ENCODE measurements at regions of chr6 and their contacts with region 1.

Region 1: DNA sequence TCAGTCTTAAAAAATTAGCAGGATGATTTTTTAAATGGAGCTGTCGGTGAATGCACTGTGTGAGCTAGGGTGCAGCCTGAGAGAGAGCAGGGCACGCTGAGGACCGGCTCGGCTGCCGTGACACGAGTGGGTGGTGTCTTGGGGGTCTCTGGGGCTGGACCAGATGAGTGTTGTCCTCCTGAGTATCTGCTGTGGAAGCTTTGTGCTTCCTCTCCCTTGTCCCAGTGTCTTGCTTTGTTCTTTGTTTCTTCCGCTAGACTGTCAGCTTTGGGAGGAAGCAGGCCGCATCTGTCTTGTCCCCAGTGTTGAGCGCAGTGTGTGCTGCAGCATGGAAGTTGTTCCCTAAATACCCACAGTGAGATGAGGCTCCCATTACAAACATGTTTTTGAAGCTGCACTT is 89.4 kb downstream of the RTN4IP1 start:
- DNase-seq: no peak
- ATAC-seq: no peak
- H3K4me3 ChIP-seq: no peak overlapping the region
- H3K4me3 Mint-ChIP-seq: no peak overlapping the region
- H3K27ac ChIP-seq: no peak overlapping the region
- H3K27ac Mint-ChIP-seq: peak overlapping the region; percentile 32
- H3K4me1 ChIP-seq: peaks cover 21% of the 10 kb centered on the region
- H3K4me1 Mint-ChIP-seq: peaks cover 44% of the 10 kb centered on the region
- H3K27me3 ChIP-seq: no peaks in the 10 kb centered on the region
- H3K27me3 Mint-ChIP-seq: no peaks in the 10 kb centered on the region
- CTCF ChIP-seq: no peak

Region 2: GRCh38 chr6:106525111-106525881 is 14.6 kb before region 1 on chr6:
- CTCF ChIA-PET with region 1: interaction called, 3 read pairs
- POLR2A ChIA-PET with region 1: interaction called, 3 read pairs
- intact Hi-C with region 1: loop called in 1 of 2 experiments (anchors 1 kb)
- DNase-seq: peak in 2 of 9 experiments; percentile 53 to 73
- ATAC-seq: peak; percentile 12
- H3K4me3 ChIP-seq: peak overlapping the region; percentile 35 to 38
- H3K4me3 Mint-ChIP-seq: peak overlapping the region; percentile 86
- H3K27ac ChIP-seq: peak overlapping the region; percentile 43 to 82
- H3K27ac Mint-ChIP-seq: peak overlapping the region; percentile 93
- H3K4me1 ChIP-seq: peaks cover 22% of the 10 kb centered on the region
- H3K4me1 Mint-ChIP-seq: peaks cover 65% of the 10 kb centered on the region
- H3K27me3 ChIP-seq: no peaks in the 10 kb centered on the region
- H3K27me3 Mint-ChIP-seq: no peaks in the 10 kb centered on the region
- CTCF ChIP-seq: no peak